MCF 10A (cell line): ENCODE measurements at regions of chr2 and their contacts with region 1.

Region 1: DNA sequence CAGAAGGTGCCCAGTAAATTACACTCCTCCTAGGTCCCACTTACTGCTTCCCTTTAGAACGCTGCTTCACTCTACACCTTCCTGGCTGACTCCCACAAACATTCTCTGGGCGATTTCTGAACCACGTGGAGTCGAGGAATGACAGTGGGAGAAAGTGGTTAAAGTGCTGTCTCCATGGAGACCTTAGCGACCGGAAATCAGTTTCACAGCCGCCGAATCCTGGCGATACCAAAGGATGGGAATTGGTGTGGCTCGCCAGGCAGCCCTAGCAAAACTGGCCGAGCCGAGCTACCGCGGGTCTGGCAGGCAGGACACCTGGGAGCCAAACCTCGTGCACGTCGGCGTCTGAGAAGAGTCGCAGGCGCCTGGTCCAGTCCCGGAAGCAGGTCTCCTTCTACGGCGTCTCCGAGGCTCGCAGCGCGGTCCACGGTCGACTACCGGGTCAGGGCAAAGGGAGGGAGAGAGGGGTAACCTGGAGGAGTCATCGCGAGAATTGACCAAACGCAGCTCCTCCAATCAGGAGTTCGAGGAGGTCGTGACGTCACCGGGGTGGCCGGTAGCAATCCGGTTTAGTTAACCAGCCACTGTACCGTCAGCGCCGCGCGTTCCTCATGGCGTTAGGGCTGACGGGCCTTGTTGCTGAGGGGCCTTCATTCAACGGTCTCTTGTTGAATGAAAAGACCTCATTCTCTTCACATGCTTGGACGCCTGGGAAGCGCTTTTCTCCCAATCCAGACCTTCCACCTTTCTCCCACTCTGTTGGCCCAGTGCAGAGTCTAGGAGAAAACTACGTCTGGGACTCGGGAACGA is at the start of gene THADA:
- DNase-seq: peak; percentile 99
- H3K4me3 Mint-ChIP-seq: peak within 1 kb of the TSS; percentile 90
- H3K27ac Mint-ChIP-seq: peak within 1 kb of the TSS; percentile 99
- H3K4me1 Mint-ChIP-seq: peaks cover 17% of the 10 kb centered on the region
- H3K27me3 Mint-ChIP-seq: peaks cover 7% of the 10 kb centered on the region
- CTCF ChIP-seq: no peak
- total RNA-seq, gene THADA: 42.3 and 49.8 TPM in 2 replicates

Region 2: GRCh38 chr2:42810121-42810970 is 785.5 kb before region 1 on chr2:
- CTCF ChIA-PET with region 1: no interaction called
- POLR2A ChIA-PET with region 1: interaction called, 11 read pairs
- intact Hi-C with region 1: no loop called
- DNase-seq: peak; percentile 92
- H3K4me3 Mint-ChIP-seq: peak overlapping the region; percentile 80
- H3K27ac Mint-ChIP-seq: peak overlapping the region; percentile 84
- H3K4me1 Mint-ChIP-seq: peaks cover 13% of the 10 kb centered on the region
- H3K27me3 Mint-ChIP-seq: no peaks in the 10 kb centered on the region
- CTCF ChIP-seq: no peak

Region 3: GRCh38 chr2:43288417-43289305 is 307.1 kb before region 1 on chr2:
- CTCF ChIA-PET with region 1: no interaction called
- POLR2A ChIA-PET with region 1: no interaction called
- intact Hi-C with region 1: no loop called
- DNase-seq: no peak
- H3K4me3 Mint-ChIP-seq: no peak overlapping the region
- H3K27ac Mint-ChIP-seq: no peak overlapping the region
- H3K4me1 Mint-ChIP-seq: peaks cover 3% of the 10 kb centered on the region
- H3K27me3 Mint-ChIP-seq: no peaks in the 10 kb centered on the region
- CTCF ChIP-seq: no peak

Region 4: DNA sequence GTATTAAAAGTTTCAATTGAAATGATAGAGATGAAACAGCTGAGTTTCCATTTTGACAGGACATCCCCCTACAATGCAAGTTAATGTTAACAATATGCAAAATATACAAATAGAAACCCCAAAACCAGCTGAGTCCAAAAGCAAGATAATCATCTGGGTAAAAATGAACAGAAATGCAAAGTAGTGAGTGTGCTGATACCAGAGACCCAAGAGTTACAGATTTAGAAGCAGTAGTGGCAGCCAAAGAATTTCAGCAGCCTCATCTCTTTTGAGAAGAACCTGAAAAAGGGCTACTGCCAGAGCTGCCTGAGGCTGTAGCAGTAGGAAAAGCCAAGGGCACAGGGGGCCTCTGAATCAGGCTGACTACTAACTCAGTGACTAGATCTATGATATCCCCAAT is 82.6 kb before region 1 on chr2:
- CTCF ChIA-PET with region 1: no interaction called
- POLR2A ChIA-PET with region 1: no interaction called
- intact Hi-C with region 1: no loop called
- DNase-seq: no peak
- H3K4me3 Mint-ChIP-seq: no peak overlapping the region
- H3K27ac Mint-ChIP-seq: no peak overlapping the region
- H3K4me1 Mint-ChIP-seq: peaks cover 26% of the 10 kb centered on the region
- H3K27me3 Mint-ChIP-seq: no peaks in the 10 kb centered on the region
- CTCF ChIP-seq: no peak

Region 5: GRCh38 chr2:43585708-43586107 is 10.1 kb before region 1 on chr2:
- CTCF ChIA-PET with region 1: interaction called, 7 read pairs
- POLR2A ChIA-PET with region 1: interaction called, 13 read pairs
- intact Hi-C with region 1: no loop called
- DNase-seq: no peak
- H3K4me3 Mint-ChIP-seq: no peak overlapping the region
- H3K27ac Mint-ChIP-seq: no peak overlapping the region
- H3K4me1 Mint-ChIP-seq: no peaks in the 10 kb centered on the region
- H3K27me3 Mint-ChIP-seq: no peaks in the 10 kb centered on the region
- CTCF ChIP-seq: no peak

Region 6: GRCh38 chr2:43611987-43612894 is 16.4 kb after region 1 on chr2:
- CTCF ChIA-PET with region 1: interaction called, 18 read pairs
- POLR2A ChIA-PET with region 1: interaction called, 4 read pairs
- intact Hi-C with region 1: no loop called
- DNase-seq: peak; percentile 82
- H3K4me3 Mint-ChIP-seq: no peak overlapping the region
- H3K27ac Mint-ChIP-seq: no peak overlapping the region
- H3K4me1 Mint-ChIP-seq: peaks cover 6% of the 10 kb centered on the region
- H3K27me3 Mint-ChIP-seq: no peaks in the 10 kb centered on the region
- CTCF ChIP-seq: peak; percentile 68